Dorsolateral prefrontal cortex (tissue), 120 donors: ENCODE measurements at regions of chr20 and their contacts with region 1.

Region 1: GRCh38 chr20:46307139-46307998 is 929 bp downstream of the CDH22 start:
- DNase-seq: peak in 4 of 10 donors; percentile 49 to 80 (median 70)
- H3K4me3 ChIP-seq: peak overlapping the region; percentile 37 to 74 (median 59)
- H3K27ac ChIP-seq: peak overlapping the region in 29 of 59 donors; percentile 10 to 90 (median 54)
- H3K27me3 ChIP-seq: peaks cover 0 to 58% (median 12%) of the 10 kb centered on the region in 45 donors
- CTCF ChIP-seq: peak; percentile 43 to 83 (median 72)

Region 2: GRCh38 chr20:46220455-46221204 is 86.7 kb before region 1 on chr20:
- intact Hi-C with region 1: loop called in 1 of 2 experiments (anchors 5 kb)
- DNase-seq: peak in 2 of 10 donors; percentile 48 to 57
- H3K4me3 ChIP-seq: no peak overlapping the region
- H3K27ac ChIP-seq: peak overlapping the region in 53 of 59 donors; percentile 11 to 94 (median 71)
- H3K27me3 ChIP-seq: no peaks in the 10 kb centered on the region
- CTCF ChIP-seq: no peak

Region 3: GRCh38 chr20:46230801-46231282 is 76.5 kb before region 1 on chr20:
- intact Hi-C with region 1: no loop called
- DNase-seq: no peak
- H3K4me3 ChIP-seq: no peak overlapping the region
- H3K27ac ChIP-seq: no peak overlapping the region
- H3K27me3 ChIP-seq: peaks cover 0 to 12% (median 0%) of the 10 kb centered on the region in 45 donors
- CTCF ChIP-seq: no peak

Region 4: GRCh38 chr20:46268131-46268614 is 39.2 kb before region 1 on chr20:
- intact Hi-C with region 1: no loop called
- DNase-seq: no peak
- H3K4me3 ChIP-seq: no peak overlapping the region
- H3K27ac ChIP-seq: peak overlapping the region in 18 of 59 donors; percentile 5 to 62 (median 22)
- H3K27me3 ChIP-seq: peaks cover 0 to 4% (median 0%) of the 10 kb centered on the region in 45 donors
- CTCF ChIP-seq: no peak

Region 5: DNA sequence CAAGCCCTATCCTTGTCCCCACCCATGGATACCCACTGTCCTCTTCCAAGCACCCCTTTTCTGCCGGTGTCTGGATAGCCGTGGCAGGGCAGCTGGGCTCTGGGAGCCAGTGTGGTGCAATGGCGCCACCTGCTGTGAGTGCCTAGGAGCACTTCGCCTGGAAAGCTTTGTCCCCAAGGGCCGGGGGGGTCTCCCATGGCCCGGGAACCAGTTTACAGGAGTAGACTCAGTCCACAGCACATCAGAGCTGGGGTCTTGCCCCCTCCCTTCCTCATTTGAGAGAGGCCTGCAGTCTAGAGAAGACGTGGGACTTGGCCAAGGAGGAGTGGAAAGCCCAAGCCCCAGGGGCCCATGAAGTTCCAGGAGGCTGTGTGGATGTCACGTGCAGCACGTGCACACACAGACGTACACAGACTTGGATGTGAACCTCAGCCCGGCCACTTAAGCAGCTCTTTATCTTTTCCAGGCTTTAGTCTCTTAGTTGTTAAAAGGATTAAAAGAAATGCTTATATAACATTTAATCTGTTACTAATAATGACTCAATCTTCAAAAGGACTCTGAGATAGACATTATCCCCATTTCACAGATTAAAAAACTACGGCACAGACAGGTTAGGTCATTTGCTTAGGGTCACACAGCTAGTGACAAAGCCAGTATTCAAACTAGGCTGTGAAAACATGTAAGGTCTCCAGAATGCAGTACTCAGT is 41.8 kb after region 1 on chr20:
- intact Hi-C with region 1: loop called in 1 of 2 experiments (anchors 5 kb)
- DNase-seq: peak in 9 of 10 donors; percentile 61 to 87 (median 69)
- H3K4me3 ChIP-seq: peak overlapping the region in 1 of 59 donors; percentile 22
- H3K27ac ChIP-seq: peak overlapping the region in 48 of 59 donors; percentile 24 to 91 (median 68)
- H3K27me3 ChIP-seq: no peaks in the 10 kb centered on the region
- CTCF ChIP-seq: peak in 55 of 56 donors; percentile 46 to 94 (median 84)

Region 6: DNA sequence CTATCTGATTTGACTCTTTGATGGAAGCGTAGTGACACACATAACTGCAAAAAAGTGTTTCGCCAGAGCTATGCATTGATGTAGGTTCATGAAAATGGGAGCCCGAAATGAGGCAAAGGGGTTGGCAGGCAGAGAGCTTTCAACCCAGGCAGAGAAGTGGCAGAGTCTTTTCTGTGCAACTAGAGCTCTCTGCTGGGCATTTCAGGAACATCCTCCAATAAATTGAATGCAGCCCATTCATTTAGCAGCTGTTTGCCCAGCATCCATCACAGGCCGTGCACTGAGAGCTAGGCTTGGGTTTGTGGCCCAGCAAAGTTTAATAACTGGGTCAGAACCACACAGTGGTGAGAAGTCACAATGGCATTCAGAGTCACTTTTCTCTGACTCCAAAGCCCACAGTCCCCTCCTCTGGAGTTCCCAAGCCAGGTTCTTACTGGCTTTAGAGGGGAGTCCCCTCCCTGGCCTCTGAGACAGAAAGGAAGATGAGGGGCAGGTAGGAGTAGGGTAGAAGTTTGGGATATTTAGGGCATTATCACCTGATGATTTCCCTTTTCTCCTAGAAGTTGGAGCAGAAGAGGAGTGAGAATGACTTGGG is 130.9 kb after region 1 on chr20:
- intact Hi-C with region 1: loop called in 1 of 2 experiments (anchors 5 kb)
- DNase-seq: peak in 9 of 10 donors; percentile 36 to 81 (median 63)
- H3K4me3 ChIP-seq: peak overlapping the region in 3 of 59 donors; percentile 27 to 33 (median 32)
- H3K27ac ChIP-seq: peak overlapping the region in 38 of 59 donors; percentile 5 to 80 (median 50)
- H3K27me3 ChIP-seq: no peaks in the 10 kb centered on the region
- CTCF ChIP-seq: peak; percentile 34 to 92 (median 74)